CD8-positive, alpha-beta T cell (primary cell): ENCODE measurements at regions of chr6 and their contacts with region 1.

Region 1: DNA sequence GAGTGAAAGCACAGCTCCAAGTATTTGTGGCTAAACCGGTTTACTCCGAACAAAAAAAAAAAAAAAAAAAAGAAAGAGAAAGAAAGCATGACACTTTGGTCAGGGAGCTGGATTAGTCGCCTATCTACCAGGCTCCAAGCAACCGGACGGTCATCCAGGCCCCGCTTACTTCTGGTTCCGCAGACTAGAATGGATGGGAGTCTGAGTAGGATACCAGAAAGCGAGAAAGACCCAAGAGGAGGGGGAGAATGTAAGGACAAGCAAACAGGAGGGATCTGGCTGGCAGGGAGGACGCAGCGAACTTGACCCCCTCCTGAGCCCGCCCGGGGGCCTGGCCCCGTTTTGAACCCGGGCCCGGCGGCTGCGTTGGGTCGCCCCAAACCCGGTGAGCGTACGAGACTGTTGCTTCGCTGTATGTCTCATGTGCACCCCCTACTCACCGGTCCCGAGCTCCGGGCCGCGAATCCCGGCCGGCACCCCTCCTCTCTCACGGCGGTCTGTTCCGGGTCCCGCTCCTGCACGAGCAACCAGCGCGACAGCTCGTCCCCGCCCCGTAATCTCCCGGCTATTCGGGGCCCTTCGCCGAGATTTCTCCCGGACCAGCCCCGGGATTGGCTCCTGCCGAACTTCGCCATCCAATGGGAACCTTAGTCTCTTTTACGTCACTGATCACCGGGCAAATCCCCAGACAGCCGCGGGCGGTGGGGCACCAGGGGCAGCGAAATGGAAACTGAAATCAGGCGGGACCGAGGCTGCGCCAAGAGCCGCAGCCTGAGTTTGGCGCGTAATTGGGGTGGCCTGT is at the start of gene TRIM26:
- DNase-seq: peak; percentile 92 to 98 (median 96)
- ATAC-seq: peak; percentile 86
- H3K4me3 ChIP-seq: peak within 1 kb of the TSS; percentile 76 to 99
- H3K4me3 Mint-ChIP-seq: peak within 1 kb of the TSS; percentile 99
- H3K27ac ChIP-seq: peak within 1 kb of the TSS; percentile 96
- H3K27ac Mint-ChIP-seq: peak within 1 kb of the TSS; percentile 99
- H3K4me1 ChIP-seq: peaks cover 33% of the 10 kb centered on the region
- H3K4me1 Mint-ChIP-seq: peaks cover 63% of the 10 kb centered on the region
- H3K27me3 ChIP-seq: no peaks in the 10 kb centered on the region
- H3K27me3 Mint-ChIP-seq: no peaks in the 10 kb centered on the region
- CTCF ChIP-seq: no peak
- total RNA-seq, gene TRIM26: 54.8 to 56.8 TPM

Region 2: DNA sequence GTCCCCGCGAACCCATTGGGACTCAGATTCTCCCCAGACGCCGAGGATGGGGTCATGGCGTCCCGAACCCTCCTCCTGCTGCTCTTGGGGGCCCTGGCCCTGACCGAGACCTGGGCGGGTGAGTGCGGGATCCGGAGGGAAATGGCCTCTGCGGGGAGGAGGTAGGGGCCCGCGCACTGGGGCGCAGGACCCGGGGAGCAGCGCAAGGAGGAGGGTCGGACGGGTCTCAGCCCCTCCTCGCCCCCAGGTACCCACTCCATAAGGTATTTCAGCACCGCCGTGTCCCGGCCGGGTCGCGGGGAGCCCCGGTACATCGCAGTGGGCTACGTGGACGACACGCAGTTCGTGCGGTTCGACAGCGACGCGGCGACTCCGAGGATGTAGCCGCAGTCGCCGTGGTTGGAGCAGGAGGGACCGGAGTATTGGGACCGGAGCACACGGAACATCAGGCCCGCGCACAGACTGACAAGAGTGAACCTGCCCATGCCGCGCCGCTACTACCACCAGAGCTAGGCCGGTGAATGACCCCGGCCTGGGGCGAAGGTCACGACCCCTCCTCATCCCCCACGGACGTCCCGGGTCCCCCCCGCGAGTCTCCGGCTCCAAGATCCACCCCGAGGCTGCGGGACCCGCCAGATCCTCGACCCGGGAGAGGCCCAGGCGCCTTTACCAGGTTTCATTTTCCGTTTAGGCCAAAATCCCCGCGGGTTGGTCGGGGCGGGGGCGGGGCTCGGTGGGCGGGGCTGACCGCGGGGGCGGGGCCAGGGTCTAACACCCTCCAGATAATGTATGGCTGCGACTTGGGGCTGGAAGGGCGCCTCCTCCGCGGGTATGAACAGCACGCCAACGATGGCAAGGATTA is 286.4 kb before region 1 on chr6:
- CTCF ChIA-PET with region 1: no interaction called
- POLR2A ChIA-PET with region 1: no interaction called
- intact Hi-C with region 1: loop called in 1 of 2 experiments (anchors 2 kb)
- DNase-seq: peak; percentile 65 to 93 (median 83)
- ATAC-seq: peak; percentile 93
- H3K4me3 ChIP-seq: peak overlapping the region; percentile 88 to 93
- H3K4me3 Mint-ChIP-seq: peak overlapping the region; percentile 83
- H3K27ac ChIP-seq: peak overlapping the region; percentile 92 to 99
- H3K27ac Mint-ChIP-seq: peak overlapping the region; percentile 94
- H3K4me1 ChIP-seq: peaks cover 8% of the 10 kb centered on the region
- H3K4me1 Mint-ChIP-seq: peaks cover 32% of the 10 kb centered on the region
- H3K27me3 ChIP-seq: no peaks in the 10 kb centered on the region
- H3K27me3 Mint-ChIP-seq: no peaks in the 10 kb centered on the region
- CTCF ChIP-seq: no peak

Region 3: GRCh38 chr6:30102970-30103874 is 109.8 kb before region 1 on chr6:
- CTCF ChIA-PET with region 1: interaction called, 3 read pairs
- POLR2A ChIA-PET with region 1: no interaction called
- intact Hi-C with region 1: loop called in 1 of 2 experiments (anchors 2 kb)
- DNase-seq: peak; percentile 72 to 91 (median 83)
- ATAC-seq: peak; percentile 89
- H3K4me3 ChIP-seq: peak overlapping the region; percentile 51 to 64
- H3K4me3 Mint-ChIP-seq: peak overlapping the region; percentile 87
- H3K27ac ChIP-seq: peak overlapping the region in 1 of 2 experiments; percentile 42
- H3K27ac Mint-ChIP-seq: peak overlapping the region; percentile 56
- H3K4me1 ChIP-seq: peaks cover 38% of the 10 kb centered on the region
- H3K4me1 Mint-ChIP-seq: peaks cover 40% of the 10 kb centered on the region
- H3K27me3 ChIP-seq: peaks cover 0 to 23% of the 10 kb centered on the region in 2 experiments
- H3K27me3 Mint-ChIP-seq: peaks cover 41% of the 10 kb centered on the region
- CTCF ChIP-seq: peak; percentile 91

Region 4: DNA sequence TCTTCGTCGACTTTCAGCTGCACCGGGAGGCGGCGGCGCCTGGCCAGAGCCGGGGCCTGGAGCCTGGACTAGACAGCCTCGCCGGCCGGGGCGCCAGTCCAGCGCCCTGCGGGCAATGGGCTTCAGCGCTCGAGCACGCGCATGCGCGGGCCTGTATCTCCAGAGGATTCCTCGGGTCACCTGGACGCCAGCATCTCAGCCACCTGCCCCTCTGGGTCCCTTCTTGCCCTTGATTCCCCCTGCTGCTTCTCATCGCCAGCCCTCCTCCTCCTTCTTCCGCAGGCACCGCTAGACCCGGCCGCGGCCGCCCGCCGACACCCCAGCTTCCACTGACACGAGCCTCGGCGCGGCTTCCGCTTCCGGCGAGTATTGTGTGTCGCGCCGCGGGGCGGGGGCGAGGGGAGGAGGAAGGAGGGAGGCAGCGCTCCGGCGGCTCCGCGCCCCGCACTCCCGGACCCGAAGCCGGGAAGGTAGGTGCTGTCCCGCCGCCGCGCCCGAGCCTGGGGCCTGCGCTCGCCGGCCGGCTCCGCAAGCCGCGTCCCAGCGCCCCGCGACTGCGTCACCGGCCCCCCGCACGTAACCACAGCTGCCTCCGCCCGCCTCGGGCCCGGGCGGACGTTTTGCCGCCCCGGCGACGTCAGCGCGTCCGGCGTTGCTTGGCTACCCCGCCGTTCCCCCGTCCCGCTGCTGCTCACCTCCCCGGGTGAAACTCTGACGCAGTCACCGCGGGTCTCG is 113.6 kb after region 1 on chr6 and contains the start of gene TRIM39:
- CTCF ChIA-PET with region 1: interaction called, 7 read pairs
- POLR2A ChIA-PET with region 1: interaction called, 15 read pairs
- intact Hi-C with region 1: loop called (anchors 1 kb)
- DNase-seq: peak; percentile 75 to 97 (median 90)
- ATAC-seq: peak; percentile 58
- H3K4me3 ChIP-seq: peak within 1 kb of the TSS; percentile 74 to 87
- H3K4me3 Mint-ChIP-seq: peak within 1 kb of the TSS; percentile 96
- H3K27ac ChIP-seq: peak within 1 kb of the TSS; percentile 95 to 99
- H3K27ac Mint-ChIP-seq: peak within 1 kb of the TSS; percentile 98
- H3K4me1 ChIP-seq: peaks cover 41% of the 10 kb centered on the region
- H3K4me1 Mint-ChIP-seq: peaks cover 59% of the 10 kb centered on the region
- H3K27me3 ChIP-seq: no peaks in the 10 kb centered on the region
- H3K27me3 Mint-ChIP-seq: no peaks in the 10 kb centered on the region
- CTCF ChIP-seq: no peak
- total RNA-seq, gene TRIM39: 50.7 to 58.5 TPM

Region 5: GRCh38 chr6:30344868-30345671 is 132.0 kb after region 1 on chr6 and contains the start of gene RPP21:
- CTCF ChIA-PET with region 1: interaction called, 3 read pairs
- POLR2A ChIA-PET with region 1: interaction called, 3 read pairs
- intact Hi-C with region 1: loop called (anchors 1 kb)
- DNase-seq: peak; percentile 70 to 92 (median 85)
- ATAC-seq: peak; percentile 98
- H3K4me3 ChIP-seq: peak within 1 kb of the TSS; percentile 80 to 86
- H3K4me3 Mint-ChIP-seq: peak within 1 kb of the TSS; percentile 93
- H3K27ac ChIP-seq: peak within 1 kb of the TSS; percentile 85 to 86
- H3K27ac Mint-ChIP-seq: peak within 1 kb of the TSS; percentile 96
- H3K4me1 ChIP-seq: peaks cover 11% of the 10 kb centered on the region
- H3K4me1 Mint-ChIP-seq: peaks cover 23% of the 10 kb centered on the region
- H3K27me3 ChIP-seq: no peaks in the 10 kb centered on the region
- H3K27me3 Mint-ChIP-seq: no peaks in the 10 kb centered on the region
- CTCF ChIP-seq: no peak
- total RNA-seq, gene RPP21: 51.0 to 52.4 TPM

Region 6: GRCh38 chr6:30396833-30397479 is 183.9 kb after region 1 on chr6:
- CTCF ChIA-PET with region 1: interaction called, 52 read pairs
- POLR2A ChIA-PET with region 1: no interaction called
- intact Hi-C with region 1: no loop called
- DNase-seq: peak; percentile 65 to 92 (median 87)
- ATAC-seq: peak; percentile 99
- H3K4me3 ChIP-seq: no peak overlapping the region
- H3K4me3 Mint-ChIP-seq: no peak overlapping the region
- H3K27ac ChIP-seq: no peak overlapping the region
- H3K27ac Mint-ChIP-seq: no peak overlapping the region
- H3K4me1 ChIP-seq: peaks cover 4% of the 10 kb centered on the region
- H3K4me1 Mint-ChIP-seq: peaks cover 4% of the 10 kb centered on the region
- H3K27me3 ChIP-seq: peaks cover 0 to 10% of the 10 kb centered on the region in 2 experiments
- H3K27me3 Mint-ChIP-seq: peaks cover 26% of the 10 kb centered on the region
- CTCF ChIP-seq: peak; percentile 94

Region 7: GRCh38 chr6:31806465-31807272 is 1593.6 kb after region 1 on chr6 and contains the start of gene LSM2:
- CTCF ChIA-PET with region 1: no interaction called
- POLR2A ChIA-PET with region 1: no interaction called
- intact Hi-C with region 1: loop called in 1 of 2 experiments (anchors 10 kb)
- DNase-seq: peak; percentile 92 to 99 (median 97)
- ATAC-seq: peak; percentile 99
- H3K4me3 ChIP-seq: peak within 1 kb of the TSS; percentile 61 to 95
- H3K4me3 Mint-ChIP-seq: peak within 1 kb of the TSS; percentile 87
- H3K27ac ChIP-seq: peak within 1 kb of the TSS; percentile 78 to 82
- H3K27ac Mint-ChIP-seq: peak within 1 kb of the TSS; percentile 94
- H3K4me1 ChIP-seq: peaks cover 8% of the 10 kb centered on the region
- H3K4me1 Mint-ChIP-seq: peaks cover 25% of the 10 kb centered on the region
- H3K27me3 ChIP-seq: no peaks in the 10 kb centered on the region
- H3K27me3 Mint-ChIP-seq: no peaks in the 10 kb centered on the region
- CTCF ChIP-seq: no peak
- total RNA-seq, gene LSM2: 19.6 to 26.4 TPM